K562 (cell line): ENCODE measurements at regions of chr1 and their contacts with region 1.

Region 1: GRCh38 chr1:219837274-219837993 is 90.9 kb downstream of the SLC30A10 start:
- DNase-seq: peak; percentile 57 to 87 (median 66)
- ATAC-seq: peak; percentile 95
- H3K4me3 ChIP-seq: no peak overlapping the region
- H3K27ac ChIP-seq: no peak overlapping the region
- H3K4me1 ChIP-seq: peaks cover 6 to 9% of the 10 kb centered on the region in 2 experiments
- H3K27me3 ChIP-seq: peaks cover 10 to 11% of the 10 kb centered on the region in 2 experiments; a peak in 4 of 5 replicates
- CTCF ChIP-seq: peak; percentile 69 to 91 (median 89)
- EP300 ChIP-seq: no peak
- POLR2A ChIP-seq: no peak
- RAD21 ChIP-seq: peak; percentile 93 to 97

Region 2: DNA sequence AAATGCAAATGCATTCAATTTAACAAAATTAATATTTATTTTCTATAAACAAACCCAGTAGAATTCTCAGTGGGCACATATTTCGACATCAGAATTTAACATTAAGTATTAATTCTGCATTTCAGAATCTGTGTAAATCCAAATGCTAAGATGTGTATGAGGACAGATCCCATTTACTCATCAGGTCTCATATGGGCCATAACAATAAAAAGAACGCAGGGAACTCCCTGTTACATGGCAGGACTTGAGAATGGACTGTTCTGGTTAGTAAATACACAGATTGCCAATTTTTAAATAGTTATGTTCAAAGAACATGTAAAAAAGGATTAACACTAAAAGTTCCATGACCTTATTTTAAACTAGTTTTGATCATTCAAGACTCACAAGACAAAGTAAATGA is 13.1 kb before region 1 on chr1:
- CTCF ChIA-PET with region 1: no interaction called
- POLR2A ChIA-PET with region 1: no interaction called
- in situ Hi-C with region 1: no loop called
- intact Hi-C with region 1: no loop called
- DNase-seq: no peak
- ATAC-seq: no peak
- H3K4me3 ChIP-seq: no peak overlapping the region
- H3K27ac ChIP-seq: no peak overlapping the region
- H3K4me1 ChIP-seq: no peaks in the 10 kb centered on the region
- H3K27me3 ChIP-seq: peaks cover 2 to 5% of the 10 kb centered on the region in 2 experiments; a peak in 2 of 5 replicates
- CTCF ChIP-seq: no peak
- EP300 ChIP-seq: no peak
- POLR2A ChIP-seq: no peak
- RAD21 ChIP-seq: no peak

Region 3: GRCh38 chr1:219965285-219966070 is 128.0 kb after region 1 on chr1:
- CTCF ChIA-PET with region 1: no interaction called
- POLR2A ChIA-PET with region 1: no interaction called
- in situ Hi-C with region 1: no loop called
- intact Hi-C with region 1: loop called (anchors 5 kb)
- DNase-seq: peak in 2 of 4 experiments; percentile 30 to 54
- ATAC-seq: peak; percentile 63
- H3K4me3 ChIP-seq: no peak overlapping the region
- H3K27ac ChIP-seq: no peak overlapping the region
- H3K4me1 ChIP-seq: peaks cover 0 to 21% of the 10 kb centered on the region in 2 experiments; a peak in 3 of 5 replicates
- H3K27me3 ChIP-seq: no peaks in the 10 kb centered on the region
- CTCF ChIP-seq: no peak
- EP300 ChIP-seq: no peak
- POLR2A ChIP-seq: no peak
- RAD21 ChIP-seq: no peak

Region 4: DNA sequence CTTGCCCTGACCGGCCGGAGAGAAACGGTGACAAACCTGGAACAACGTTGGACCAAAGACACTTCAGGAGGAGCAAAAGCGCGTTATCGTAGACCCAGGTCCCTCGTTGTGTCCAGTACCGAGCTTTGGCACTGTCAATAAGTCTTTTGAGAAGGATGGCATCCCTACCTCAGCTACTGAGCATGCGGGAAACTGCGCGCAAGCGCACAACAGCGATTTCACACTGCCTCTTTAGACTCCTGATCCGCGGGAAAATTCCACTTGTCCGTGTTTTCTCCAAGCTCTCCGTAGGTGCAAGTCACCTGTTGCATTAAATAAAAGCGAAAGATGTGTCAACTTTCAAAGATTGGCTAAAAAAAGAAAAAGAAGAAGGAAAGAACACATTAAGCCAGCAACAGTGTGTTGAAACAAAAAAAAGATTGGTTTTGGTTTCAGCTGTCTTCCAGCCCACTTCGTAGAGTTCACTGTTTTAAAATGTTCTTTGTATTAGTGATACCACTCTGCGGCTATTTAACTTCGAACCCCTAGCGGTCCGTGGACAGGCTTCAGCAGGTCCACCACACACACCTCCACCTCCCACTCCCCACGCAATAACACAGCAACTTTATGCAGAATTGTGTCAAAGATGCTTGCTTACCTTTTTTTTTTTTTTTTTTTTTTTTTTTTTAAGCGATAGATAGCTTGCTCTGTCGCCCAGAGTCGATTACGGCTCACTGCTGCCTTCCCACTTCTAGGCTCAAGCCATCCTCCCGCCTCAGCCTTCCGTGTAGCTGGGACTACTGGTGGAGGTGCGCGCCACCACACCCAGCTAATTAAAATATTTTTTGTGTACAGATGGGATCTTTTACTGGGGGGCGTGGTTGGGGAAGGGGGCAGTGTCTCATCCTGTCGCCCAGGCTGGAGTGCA is 252.5 kb after region 1 on chr1 and contains the start of gene BPNT1:
- CTCF ChIA-PET with region 1: no interaction called
- POLR2A ChIA-PET with region 1: no interaction called
- in situ Hi-C with region 1: no loop called
- intact Hi-C with region 1: loop called (anchors 5 kb)
- DNase-seq: peak; percentile 90 to 98 (median 91)
- ATAC-seq: peak; percentile 79
- H3K4me3 ChIP-seq: peak within 1 kb of the TSS; percentile 50
- H3K27ac ChIP-seq: peak within 1 kb of the TSS; percentile 13; the same call in 2 of the 3 replicates
- H3K4me1 ChIP-seq: peaks cover 9 to 18% of the 10 kb centered on the region in 2 experiments; a peak in 4 of 5 replicates
- H3K27me3 ChIP-seq: no peaks in the 10 kb centered on the region
- CTCF ChIP-seq: peak in 1 of 3 experiments; percentile 30; a peak in 1 of 6 replicates
- EP300 ChIP-seq: peak; percentile 64
- POLR2A ChIP-seq: peak; percentile 75
- RAD21 ChIP-seq: no peak
- polyA plus RNA-seq, gene BPNT1: 30.2 to 52.9 TPM

Region 5: DNA sequence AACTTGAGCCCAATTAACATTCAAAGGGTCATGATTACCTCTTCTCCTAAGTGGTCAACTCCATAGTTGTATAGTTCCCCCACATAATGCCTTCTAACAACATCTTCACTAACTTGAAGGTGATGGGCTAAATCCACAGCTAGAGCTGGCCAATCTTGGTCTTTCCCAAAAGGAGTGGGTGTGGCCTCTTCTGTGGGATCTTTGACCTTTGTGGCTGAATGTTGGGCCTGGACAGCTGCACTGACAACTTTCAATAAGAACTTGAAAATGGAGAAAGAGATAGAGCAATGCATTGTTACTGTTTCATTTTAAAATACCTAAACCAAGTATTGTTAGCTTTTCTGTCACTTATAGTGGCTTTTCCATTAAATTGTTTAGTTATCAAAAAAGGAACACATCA is 315.7 kb after region 1 on chr1:
- CTCF ChIA-PET with region 1: no interaction called
- POLR2A ChIA-PET with region 1: no interaction called
- in situ Hi-C with region 1: no loop called
- intact Hi-C with region 1: loop called (anchors 2 kb)
- DNase-seq: peak in 2 of 4 experiments; percentile 27 to 52
- ATAC-seq: peak; percentile 70
- H3K4me3 ChIP-seq: no peak overlapping the region
- H3K27ac ChIP-seq: no peak overlapping the region
- H3K4me1 ChIP-seq: no peaks in the 10 kb centered on the region
- H3K27me3 ChIP-seq: no peaks in the 10 kb centered on the region
- CTCF ChIP-seq: no peak
- EP300 ChIP-seq: no peak
- POLR2A ChIP-seq: no peak
- RAD21 ChIP-seq: no peak

Region 6: DNA sequence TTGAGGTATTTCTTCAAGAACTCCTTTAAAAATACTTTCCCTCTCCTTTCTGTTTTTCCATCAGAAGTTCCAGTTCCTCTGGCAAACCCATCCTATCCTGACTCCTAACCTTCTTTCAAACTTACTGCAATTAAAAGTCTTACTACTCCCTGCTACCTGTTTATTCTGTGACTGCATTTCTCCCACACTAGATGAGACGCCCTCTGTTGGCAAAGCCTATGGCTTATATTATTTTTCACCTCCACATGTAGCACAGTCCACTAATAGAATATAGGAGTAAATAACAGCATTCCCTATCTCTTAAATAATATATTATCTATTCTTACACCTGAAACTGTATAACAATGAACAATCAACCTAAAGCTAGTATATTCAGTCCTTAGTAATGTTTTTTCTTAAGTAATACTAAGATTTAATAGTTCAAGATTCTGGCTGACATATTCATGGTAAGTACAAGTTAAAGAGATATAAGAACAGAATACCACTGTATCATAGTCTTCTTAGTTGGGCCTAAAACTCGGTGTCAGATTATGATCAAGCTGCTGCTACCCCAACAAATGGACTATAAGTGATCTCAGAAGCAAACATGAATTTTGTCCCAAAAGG is 380.1 kb after region 1 on chr1:
- CTCF ChIA-PET with region 1: interaction called, 5 read pairs
- POLR2A ChIA-PET with region 1: no interaction called
- in situ Hi-C with region 1: no loop called
- intact Hi-C with region 1: loop called (anchors 5 kb)
- DNase-seq: peak in 2 of 4 experiments; percentile 42 to 49
- ATAC-seq: peak; percentile 76
- H3K4me3 ChIP-seq: no peak overlapping the region
- H3K27ac ChIP-seq: no peak overlapping the region
- H3K4me1 ChIP-seq: peaks cover 0 to 9% of the 10 kb centered on the region in 2 experiments; a peak in 1 of 5 replicates
- H3K27me3 ChIP-seq: no peaks in the 10 kb centered on the region
- CTCF ChIP-seq: peak; percentile 56 to 66 (median 63); a peak in 5 of 6 replicates
- EP300 ChIP-seq: no peak
- POLR2A ChIP-seq: no peak
- RAD21 ChIP-seq: no peak; a peak in 1 of 4 replicates

Region 7: GRCh38 chr1:220353229-220354012 is 516.0 kb after region 1 on chr1:
- CTCF ChIA-PET with region 1: no interaction called
- POLR2A ChIA-PET with region 1: no interaction called
- in situ Hi-C with region 1: no loop called
- intact Hi-C with region 1: loop called (anchors 10 kb)
- DNase-seq: peak in 1 of 4 experiments; percentile 27
- ATAC-seq: peak; percentile 91
- H3K4me3 ChIP-seq: no peak overlapping the region
- H3K27ac ChIP-seq: no peak overlapping the region
- H3K4me1 ChIP-seq: 0 out of 5 replicates have a peak, but pooled peaks cover 0 to 3% of the 10 kb centered on the region in 2 experiments
- H3K27me3 ChIP-seq: peaks cover 8 to 14% of the 10 kb centered on the region in 2 experiments; a peak in 4 of 5 replicates
- CTCF ChIP-seq: peak; percentile 11 to 50 (median 40); a peak in 3 of 6 replicates
- EP300 ChIP-seq: no peak
- POLR2A ChIP-seq: no peak
- RAD21 ChIP-seq: no peak